Transverse colon (tissue), 4 donors: ENCODE measurements at regions of chr7 and their contacts with region 1.

Region 1: DNA sequence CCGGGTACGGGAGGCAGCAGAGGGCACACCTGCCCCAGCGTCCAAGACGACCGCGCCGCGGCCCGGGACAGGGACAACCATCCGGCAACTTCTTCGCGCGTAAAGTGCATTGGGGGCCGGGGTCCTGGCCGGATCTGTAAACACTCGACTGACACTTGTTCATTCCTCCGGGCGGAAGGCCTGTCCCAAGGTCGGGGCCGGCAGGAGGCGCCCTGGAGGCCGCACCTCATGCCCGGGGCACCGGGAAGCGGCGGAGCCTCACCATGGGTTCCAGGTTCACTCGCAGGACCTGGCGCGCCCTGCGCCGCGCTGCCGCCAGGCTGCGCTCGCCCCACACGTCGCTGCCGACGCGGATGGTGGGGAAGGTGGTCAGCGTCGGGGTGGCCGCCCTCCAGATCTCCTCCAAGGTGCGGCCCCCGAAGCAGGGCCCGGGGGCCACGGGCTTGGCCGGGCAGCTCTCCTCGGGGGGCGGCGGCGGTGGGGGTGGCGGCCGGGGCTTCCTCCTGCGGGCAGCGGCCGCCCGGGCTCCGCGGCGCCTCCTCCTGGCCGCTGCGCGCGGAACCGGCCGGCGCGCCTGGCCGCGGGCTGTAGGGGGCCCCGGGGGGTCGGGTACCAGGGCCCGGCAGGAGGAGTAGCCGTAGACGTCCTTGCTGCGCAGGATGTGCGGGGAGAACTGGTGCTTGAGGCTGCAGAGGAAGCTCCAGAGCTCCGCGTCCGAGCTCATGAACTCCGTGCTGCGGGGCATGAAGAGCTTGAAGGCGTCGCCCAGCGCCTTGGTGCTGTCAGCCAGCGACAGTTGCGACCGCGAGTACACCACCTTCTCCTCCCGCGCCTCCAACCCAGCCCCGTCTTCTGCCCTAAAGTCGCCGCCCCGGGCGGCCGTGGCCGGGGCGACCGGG is 746 bp downstream of the CCDC71L start:
- DNase-seq: peak; percentile 85
- H3K4me3 ChIP-seq: peak overlapping the region; percentile 89 to 99 (median 90)
- H3K27ac ChIP-seq: peak overlapping the region; percentile 93 to 99 (median 98)
- H3K4me1 ChIP-seq: peaks cover 12 to 29% (median 16%) of the 10 kb centered on the region in 4 donors
- H3K27me3 ChIP-seq: no peaks in the 10 kb centered on the region
- CTCF ChIP-seq: peak; percentile 62 to 92 (median 75)
- EP300 ChIP-seq: no peak
- POLR2A ChIP-seq: peak; percentile 37

Region 2: DNA sequence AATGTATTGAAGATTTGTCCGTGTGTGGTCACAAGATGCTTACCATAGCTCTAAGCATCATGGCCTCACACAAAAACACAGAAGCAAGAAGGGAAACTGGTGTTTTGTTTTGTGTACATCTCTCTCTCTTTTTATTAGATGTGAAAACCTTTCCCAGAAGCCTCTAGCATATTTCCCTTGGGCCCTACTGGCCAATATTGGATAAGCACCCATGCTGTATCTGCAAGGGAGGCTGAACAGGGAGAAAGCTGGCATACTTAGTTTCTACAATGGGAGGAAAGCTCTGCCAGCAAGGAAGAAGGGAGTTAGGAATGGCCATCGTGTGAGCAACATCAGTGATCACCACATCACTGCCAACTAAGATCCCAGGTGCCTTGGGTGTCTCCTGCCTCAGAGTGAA is 365.9 kb before region 1 on chr7:
- in situ Hi-C with region 1: no loop called
- intact Hi-C with region 1: loop called (anchors 5 kb)
- DNase-seq: no peak
- H3K4me3 ChIP-seq: no peak overlapping the region
- H3K27ac ChIP-seq: no peak overlapping the region
- H3K4me1 ChIP-seq: peaks cover 0 to 17% (median 5%) of the 10 kb centered on the region in 4 donors
- H3K27me3 ChIP-seq: no peaks in the 10 kb centered on the region
- CTCF ChIP-seq: peak in 1 of 5 experiments; percentile 13
- EP300 ChIP-seq: no peak
- POLR2A ChIP-seq: no peak

Region 3: GRCh38 chr7:106493041-106493731 is 167.0 kb before region 1 on chr7:
- in situ Hi-C with region 1: no loop called
- intact Hi-C with region 1: no loop called
- DNase-seq: peak; percentile 72
- H3K4me3 ChIP-seq: no peak overlapping the region
- H3K27ac ChIP-seq: peak overlapping the region in 1 of 4 donors; percentile 0
- H3K4me1 ChIP-seq: peaks cover 0 to 3% (median 0%) of the 10 kb centered on the region in 4 donors
- H3K27me3 ChIP-seq: no peaks in the 10 kb centered on the region
- CTCF ChIP-seq: no peak
- EP300 ChIP-seq: no peak
- POLR2A ChIP-seq: no peak

Region 4: GRCh38 chr7:106542550-106543220 is 117.5 kb before region 1 on chr7:
- in situ Hi-C with region 1: loop called in 1 of 4 experiments (anchors 10 kb)
- intact Hi-C with region 1: no loop called
- DNase-seq: peak; percentile 73
- H3K4me3 ChIP-seq: no peak overlapping the region
- H3K27ac ChIP-seq: peak overlapping the region; percentile 50 to 74 (median 66)
- H3K4me1 ChIP-seq: peaks cover 0 to 16% (median 4%) of the 10 kb centered on the region in 4 donors
- H3K27me3 ChIP-seq: no peaks in the 10 kb centered on the region
- CTCF ChIP-seq: peak; percentile 61 to 93 (median 70)
- EP300 ChIP-seq: no peak
- POLR2A ChIP-seq: no peak

Region 5: GRCh38 chr7:106609416-106609815 is 50.8 kb before region 1 on chr7:
- in situ Hi-C with region 1: no loop called
- intact Hi-C with region 1: no loop called
- DNase-seq: no peak
- H3K4me3 ChIP-seq: no peak overlapping the region
- H3K27ac ChIP-seq: peak overlapping the region; percentile 55 to 75 (median 68)
- H3K4me1 ChIP-seq: peaks cover 0 to 31% (median 13%) of the 10 kb centered on the region in 4 donors
- H3K27me3 ChIP-seq: no peaks in the 10 kb centered on the region
- CTCF ChIP-seq: no peak
- EP300 ChIP-seq: no peak
- POLR2A ChIP-seq: no peak

Region 6: GRCh38 chr7:106779877-106780276 is 119.7 kb after region 1 on chr7:
- in situ Hi-C with region 1: no loop called
- intact Hi-C with region 1: no loop called
- DNase-seq: peak; percentile 69
- H3K4me3 ChIP-seq: no peak overlapping the region
- H3K27ac ChIP-seq: no peak overlapping the region
- H3K4me1 ChIP-seq: peaks cover 0 to 7% (median 2%) of the 10 kb centered on the region in 4 donors
- H3K27me3 ChIP-seq: no peaks in the 10 kb centered on the region
- CTCF ChIP-seq: peak in 3 of 5 experiments; percentile 17 to 58 (median 25)
- EP300 ChIP-seq: no peak
- POLR2A ChIP-seq: no peak

Region 7: GRCh38 chr7:106870983-106871410 is 210.8 kb after region 1 on chr7:
- in situ Hi-C with region 1: no loop called
- intact Hi-C with region 1: no loop called
- DNase-seq: no peak
- H3K4me3 ChIP-seq: no peak overlapping the region
- H3K27ac ChIP-seq: peak overlapping the region in 3 of 4 donors; percentile 34 to 51 (median 42)
- H3K4me1 ChIP-seq: peaks cover 0 to 5% (median 0%) of the 10 kb centered on the region in 4 donors
- H3K27me3 ChIP-seq: no peaks in the 10 kb centered on the region
- CTCF ChIP-seq: no peak
- EP300 ChIP-seq: no peak
- POLR2A ChIP-seq: no peak